ENCODE measurements at regions of chr20 and their contacts with region 1.

Region 1: GRCh38 chr20:41339507-41340326 is 904 bp upstream of the LPIN3 start:
- DNase-seq: peak; percentile 94
- ATAC-seq: peak; percentile 77
- H3K4me3 ChIP-seq: peak overlapping the region; percentile 72
- H3K27ac ChIP-seq: no peak overlapping the region
- H3K4me1 ChIP-seq: peaks cover 15% of the 10 kb centered on the region
- H3K27me3 ChIP-seq: no peaks in the 10 kb centered on the region
- CTCF ChIP-seq: peak; percentile 97

Region 2: DNA sequence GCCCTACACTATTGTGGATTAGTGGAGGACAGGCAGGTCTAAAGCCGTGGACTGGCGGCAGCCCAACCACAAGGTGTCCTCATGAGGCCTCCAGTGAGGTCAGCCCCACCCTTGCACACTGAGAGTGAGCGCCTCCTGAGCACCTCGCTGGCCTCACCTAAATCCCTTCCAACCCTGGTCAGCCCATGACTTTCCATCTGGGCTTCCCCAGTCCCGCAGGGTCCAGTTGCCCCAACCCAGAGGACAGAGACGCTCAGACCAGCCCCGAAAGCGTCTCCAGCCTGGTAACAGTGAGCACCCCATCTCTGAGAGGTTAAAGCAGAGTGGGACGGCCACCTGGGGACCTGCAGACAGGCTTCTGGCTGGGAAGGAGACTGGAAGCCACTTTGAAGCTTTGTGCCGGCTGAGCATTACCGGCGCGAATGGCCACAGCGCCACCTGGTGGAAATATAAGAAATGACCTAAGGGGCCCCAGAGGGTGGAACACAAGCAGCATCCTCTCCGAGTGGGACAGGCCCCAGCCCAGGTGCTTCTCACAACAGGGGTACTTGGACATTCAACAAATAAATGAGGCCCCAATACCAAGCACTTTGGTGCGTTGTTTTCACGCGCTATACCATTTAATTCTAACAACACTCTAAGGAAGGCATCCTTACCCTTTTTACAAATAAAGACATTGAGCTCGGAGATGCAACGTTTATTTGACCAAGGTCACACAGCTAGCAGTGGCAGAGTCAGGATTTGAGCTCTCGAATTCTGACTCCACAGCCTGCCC is 376.8 kb before region 1 on chr20:
- CTCF ChIA-PET with region 1: no interaction called
- POLR2A ChIA-PET with region 1: no interaction called
- intact Hi-C with region 1: loop called (anchors 2 kb)
- DNase-seq: peak; percentile 83
- ATAC-seq: peak; percentile 85
- H3K4me3 ChIP-seq: no peak overlapping the region
- H3K27ac ChIP-seq: no peak overlapping the region
- H3K4me1 ChIP-seq: peaks cover 17% of the 10 kb centered on the region
- H3K27me3 ChIP-seq: no peaks in the 10 kb centered on the region
- CTCF ChIP-seq: peak; percentile 94

Region 3: DNA sequence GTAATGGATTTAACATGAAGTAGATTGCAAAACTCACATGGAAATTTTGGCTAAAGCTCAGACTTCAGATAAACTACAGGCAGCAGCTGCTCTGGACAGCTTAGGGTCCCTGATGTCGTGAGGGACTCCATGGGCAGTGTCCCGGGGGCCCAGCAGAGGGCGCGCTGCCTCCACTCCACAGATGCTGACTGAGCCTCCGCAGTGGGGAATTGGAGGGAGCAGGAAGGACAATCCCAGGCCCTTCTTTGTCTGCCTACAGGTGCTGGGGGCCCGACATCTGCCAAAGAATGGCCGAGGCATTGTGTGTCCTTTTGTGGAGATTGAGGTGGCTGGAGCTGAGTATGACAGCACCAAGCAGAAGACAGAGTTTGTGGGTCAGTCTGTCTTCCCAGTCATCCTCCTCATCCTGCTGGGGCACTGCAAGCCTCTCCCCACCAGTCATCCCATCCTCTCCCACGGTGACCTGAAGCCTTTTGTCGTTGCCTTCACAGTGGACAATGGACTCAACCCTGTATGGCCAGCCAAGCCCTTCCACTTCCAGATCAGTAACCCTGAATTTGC is 166.5 kb before region 1 on chr20:
- CTCF ChIA-PET with region 1: interaction called, 61 read pairs
- POLR2A ChIA-PET with region 1: no interaction called
- intact Hi-C with region 1: loop called (anchors 1 kb)
- DNase-seq: peak; percentile 78
- ATAC-seq: peak; percentile 72
- H3K4me3 ChIP-seq: no peak overlapping the region
- H3K27ac ChIP-seq: no peak overlapping the region
- H3K4me1 ChIP-seq: peaks cover 21% of the 10 kb centered on the region
- H3K27me3 ChIP-seq: no peaks in the 10 kb centered on the region
- CTCF ChIP-seq: peak; percentile 97

Region 4: DNA sequence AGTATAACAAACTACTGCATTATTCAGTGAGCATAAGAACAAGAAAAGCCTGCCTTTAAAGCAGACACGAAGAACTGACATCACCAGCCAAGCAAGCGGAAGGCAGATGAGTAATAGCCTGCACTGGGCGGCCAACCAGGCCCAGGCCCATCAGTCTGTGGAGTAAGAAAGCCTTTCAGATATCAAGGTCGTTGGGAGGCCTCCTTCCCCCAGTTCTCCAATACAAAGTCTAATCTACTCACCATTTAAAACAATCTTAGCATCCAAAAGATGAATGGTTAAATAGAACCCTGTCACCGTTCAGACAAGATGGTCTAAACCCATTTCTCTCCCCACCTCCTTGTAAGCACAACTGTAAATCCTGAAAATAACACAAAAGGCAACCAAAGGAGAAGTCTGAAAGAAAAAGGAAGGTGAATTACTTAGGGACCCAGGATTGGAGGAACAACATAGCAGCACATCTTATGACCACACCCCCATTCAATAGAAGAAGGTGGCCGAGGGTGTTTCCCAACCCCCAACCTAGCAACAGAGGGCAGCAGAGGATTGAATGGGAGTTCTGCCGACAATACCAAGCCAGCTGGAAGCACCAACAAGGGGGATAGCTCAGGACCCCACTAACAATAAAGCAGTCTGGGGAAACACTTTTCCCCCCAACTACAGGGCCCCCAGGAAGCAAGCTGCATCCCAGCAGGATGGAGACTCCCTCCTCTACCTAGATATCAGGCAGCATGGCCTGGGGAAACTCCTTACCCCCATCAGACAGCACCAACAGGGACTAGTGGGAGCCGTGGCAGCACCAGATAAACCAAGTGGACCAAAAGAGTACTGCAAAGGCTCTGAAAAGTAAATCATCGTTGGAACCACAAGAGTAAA is 90.1 kb before region 1 on chr20:
- CTCF ChIA-PET with region 1: interaction called, 3 read pairs
- POLR2A ChIA-PET with region 1: interaction called, 20 read pairs
- intact Hi-C with region 1: loop called (anchors 1 kb)
- DNase-seq: peak; percentile 83
- ATAC-seq: peak; percentile 90
- H3K4me3 ChIP-seq: peak overlapping the region; percentile 26; the same call in 1 of the 2 replicates
- H3K27ac ChIP-seq: peak overlapping the region; percentile 81
- H3K4me1 ChIP-seq: peaks cover 23% of the 10 kb centered on the region
- H3K27me3 ChIP-seq: no peaks in the 10 kb centered on the region
- CTCF ChIP-seq: peak; percentile 64

Region 5: GRCh38 chr20:41317536-41318270 is 22.0 kb before region 1 on chr20 and contains the start of gene ZHX3:
- CTCF ChIA-PET with region 1: interaction called, 6 read pairs
- POLR2A ChIA-PET with region 1: interaction called, 3 read pairs
- intact Hi-C with region 1: loop called (anchors 1 kb)
- DNase-seq: peak; percentile 98
- ATAC-seq: peak; percentile 95
- H3K4me3 ChIP-seq: peak within 1 kb of the TSS; percentile 83
- H3K27ac ChIP-seq: peak within 1 kb of the TSS; percentile 71
- H3K4me1 ChIP-seq: peaks cover 27% of the 10 kb centered on the region
- H3K27me3 ChIP-seq: no peaks in the 10 kb centered on the region
- CTCF ChIP-seq: no peak
- total RNA-seq, gene ZHX3: 14.0 and 16.2 TPM in 2 replicates

Region 6: DNA sequence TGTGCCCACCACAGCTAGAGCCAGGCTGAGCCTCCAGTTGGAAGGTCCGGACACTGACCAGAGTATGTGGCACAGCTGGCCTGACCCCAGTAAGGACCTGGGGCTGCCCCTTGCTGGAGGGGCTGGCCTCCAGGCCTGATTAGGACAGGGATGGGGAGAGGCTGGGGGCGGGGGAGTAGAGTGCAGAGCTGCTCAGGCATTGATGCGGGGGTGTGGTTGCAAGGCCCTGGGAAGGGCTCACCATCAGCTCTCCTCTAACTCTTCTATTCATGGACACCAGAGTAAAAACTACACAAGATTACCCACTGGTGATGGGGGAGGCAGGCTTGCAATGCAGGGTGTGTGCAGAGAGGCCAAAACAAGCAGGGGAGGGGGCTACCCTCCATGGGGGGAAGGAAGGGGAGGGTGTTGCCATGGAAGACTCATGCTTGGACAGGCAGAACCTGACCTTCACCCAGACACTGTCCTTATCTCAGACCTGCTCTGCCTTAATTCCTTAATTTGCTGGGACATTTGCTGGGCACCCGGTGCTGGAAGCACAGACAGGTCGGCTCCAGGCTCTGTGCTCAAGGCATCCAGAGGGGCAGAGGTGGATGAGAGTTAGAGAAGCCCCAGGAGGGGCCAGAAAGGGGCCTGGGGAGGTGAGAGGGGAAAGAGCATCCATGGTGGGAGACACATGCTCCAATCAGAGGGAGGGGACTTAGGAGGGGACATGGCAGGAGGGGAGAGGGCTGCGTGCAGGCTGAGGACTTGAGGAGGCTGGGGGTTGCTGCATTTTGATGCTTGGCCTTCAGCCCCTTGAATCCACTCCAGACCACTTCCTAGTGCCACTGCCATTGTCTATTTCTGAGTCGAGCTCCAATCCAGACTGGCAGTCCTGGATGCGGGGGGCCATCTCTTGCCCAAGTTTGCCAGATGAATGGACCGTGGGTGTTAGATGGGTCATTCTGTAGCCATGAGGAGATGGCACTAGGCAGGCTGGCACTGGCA is 34.5 kb after region 1 on chr20:
- CTCF ChIA-PET with region 1: no interaction called
- POLR2A ChIA-PET with region 1: no interaction called
- intact Hi-C with region 1: no loop called
- DNase-seq: no peak
- ATAC-seq: no peak
- H3K4me3 ChIP-seq: no peak overlapping the region
- H3K27ac ChIP-seq: no peak overlapping the region
- H3K4me1 ChIP-seq: no peaks in the 10 kb centered on the region
- H3K27me3 ChIP-seq: peaks cover 22% of the 10 kb centered on the region
- CTCF ChIP-seq: no peak

Region 7: DNA sequence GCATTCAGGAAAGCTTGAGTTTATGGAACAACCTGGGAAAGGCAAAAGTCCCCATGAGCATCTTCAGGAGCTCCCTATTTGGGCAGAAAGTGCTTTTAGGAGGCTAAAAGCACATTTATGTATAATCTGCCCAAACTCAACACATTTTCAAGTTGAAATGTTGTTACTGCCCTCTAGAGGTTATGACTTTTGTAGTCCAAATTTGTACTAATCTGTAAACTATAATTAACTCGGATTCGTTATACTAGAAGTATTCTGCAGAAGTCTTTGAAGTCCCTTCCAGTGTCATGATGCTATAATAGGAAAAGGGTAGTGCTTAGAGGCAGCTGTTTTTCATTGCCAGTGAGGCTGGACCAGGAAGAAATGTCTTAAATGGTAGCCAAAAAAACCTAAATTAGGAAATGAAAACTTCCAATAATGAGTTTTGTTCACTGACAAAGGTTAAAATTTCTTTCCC is 71.7 kb after region 1 on chr20:
- CTCF ChIA-PET with region 1: no interaction called
- POLR2A ChIA-PET with region 1: no interaction called
- intact Hi-C with region 1: loop called (anchors 2 kb)
- DNase-seq: peak; percentile 59
- ATAC-seq: 0 out of 2 replicates have a peak, but pooled peaks have one; percentile 22
- H3K4me3 ChIP-seq: no peak overlapping the region
- H3K27ac ChIP-seq: no peak overlapping the region
- H3K4me1 ChIP-seq: no peaks in the 10 kb centered on the region
- H3K27me3 ChIP-seq: no peaks in the 10 kb centered on the region
- CTCF ChIP-seq: peak; percentile 70

Region 8: GRCh38 chr20:41643504-41643938 is 303.8 kb after region 1 on chr20:
- CTCF ChIA-PET with region 1: no interaction called
- POLR2A ChIA-PET with region 1: interaction called, 18 read pairs
- intact Hi-C with region 1: no loop called
- DNase-seq: peak; percentile 51
- ATAC-seq: peak; percentile 24; the same call in 1 of the 2 replicates
- H3K4me3 ChIP-seq: no peak overlapping the region
- H3K27ac ChIP-seq: no peak overlapping the region
- H3K4me1 ChIP-seq: peaks cover 13% of the 10 kb centered on the region; the same call in 1 of the 2 replicates
- H3K27me3 ChIP-seq: peaks cover 17% of the 10 kb centered on the region
- CTCF ChIP-seq: no peak

Region 9: GRCh38 chr20:41693136-41693979 is 353.6 kb after region 1 on chr20:
- CTCF ChIA-PET with region 1: no interaction called
- POLR2A ChIA-PET with region 1: no interaction called
- intact Hi-C with region 1: no loop called
- DNase-seq: peak; percentile 91
- ATAC-seq: peak; percentile 95
- H3K4me3 ChIP-seq: peak overlapping the region; percentile 76
- H3K27ac ChIP-seq: no peak overlapping the region
- H3K4me1 ChIP-seq: peaks cover 3% of the 10 kb centered on the region; the same call in 1 of the 2 replicates
- H3K27me3 ChIP-seq: peaks cover 4% of the 10 kb centered on the region; the same call in 1 of the 2 replicates
- CTCF ChIP-seq: peak; percentile 90